Activated T-helper 2 cell treated with anti-CD3 and anti-CD28 coated beads, Interferon-gamma antibody, Interleukin-2, Interleukin-4, amounts not matched to agents 10 μg/mL and 5 μg/mL and 100 μg/mL, durations not matched to agents 14 hours and 24 hours and 36 hours (primary cell): ENCODE measurements at regions of chr9 and their contacts with region 1.

Region 1: GRCh38 chr9:100426530-100427428 is at the start of gene MSANTD3:
- DNase-seq: peak; percentile 50
- H3K4me3 Mint-ChIP-seq: peak within 1 kb of the TSS; percentile 85
- H3K27ac Mint-ChIP-seq: peak within 1 kb of the TSS; percentile 89
- H3K4me1 Mint-ChIP-seq: peaks cover 26% of the 10 kb centered on the region
- H3K27me3 Mint-ChIP-seq: peaks cover 11% of the 10 kb centered on the region
- total RNA-seq, gene MSANTD3: 16.2 and 17.6 TPM in 2 replicates

Region 2: DNA sequence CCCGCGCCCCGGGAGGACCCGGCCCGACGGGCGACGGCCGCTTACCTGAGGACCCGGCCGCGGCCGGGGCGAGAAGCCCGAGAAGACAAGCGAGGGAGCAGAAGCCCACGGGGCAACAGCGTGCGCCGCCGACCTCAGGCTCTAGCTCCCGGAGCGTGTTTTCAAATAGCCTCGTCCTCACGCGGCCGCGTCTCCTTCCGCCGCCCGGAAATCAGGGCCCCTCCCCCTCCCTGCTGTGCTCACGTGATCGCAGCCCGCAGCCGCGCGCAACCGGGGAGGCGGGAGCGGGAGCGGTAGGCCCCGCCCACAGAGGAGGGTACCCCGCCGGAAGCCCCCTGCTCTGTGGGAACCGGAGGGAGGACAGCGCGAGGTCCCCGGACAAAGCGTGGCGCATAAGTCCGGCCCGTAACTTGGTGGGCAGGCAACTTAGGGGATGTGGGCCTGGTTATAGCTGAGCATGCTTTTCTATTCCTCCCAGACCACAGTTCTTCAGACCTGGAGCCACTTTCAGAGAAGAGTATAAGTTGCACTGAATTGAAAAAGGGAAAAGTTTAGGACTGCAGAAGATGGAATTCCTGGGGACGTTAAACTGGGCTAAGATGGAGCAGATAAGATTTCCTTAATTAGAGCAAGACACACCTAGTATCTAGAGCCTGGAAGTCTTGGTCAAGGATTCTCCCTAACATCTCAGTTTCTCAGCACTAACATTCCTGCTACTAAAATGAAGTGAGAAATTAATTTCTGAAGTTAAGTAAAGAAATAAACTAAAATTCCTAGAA is 73.9 kb before region 1 on chr9 and contains the start of gene TEX10:
- intact Hi-C with region 1: loop called (anchors 1 kb)
- DNase-seq: peak; percentile 86
- H3K4me3 Mint-ChIP-seq: peak within 1 kb of the TSS; percentile 96
- H3K27ac Mint-ChIP-seq: peak within 1 kb of the TSS; percentile 80
- H3K4me1 Mint-ChIP-seq: peaks cover 38% of the 10 kb centered on the region
- H3K27me3 Mint-ChIP-seq: no peaks in the 10 kb centered on the region
- total RNA-seq, gene TEX10: 26.9 and 30.0 TPM in 2 replicates

Region 3: GRCh38 chr9:100397529-100398266 is 29.1 kb before region 1 on chr9:
- intact Hi-C with region 1: no loop called
- DNase-seq: no peak
- H3K4me3 Mint-ChIP-seq: no peak overlapping the region
- H3K27ac Mint-ChIP-seq: no peak overlapping the region
- H3K4me1 Mint-ChIP-seq: no peaks in the 10 kb centered on the region
- H3K27me3 Mint-ChIP-seq: peaks cover 15% of the 10 kb centered on the region

Region 4: DNA sequence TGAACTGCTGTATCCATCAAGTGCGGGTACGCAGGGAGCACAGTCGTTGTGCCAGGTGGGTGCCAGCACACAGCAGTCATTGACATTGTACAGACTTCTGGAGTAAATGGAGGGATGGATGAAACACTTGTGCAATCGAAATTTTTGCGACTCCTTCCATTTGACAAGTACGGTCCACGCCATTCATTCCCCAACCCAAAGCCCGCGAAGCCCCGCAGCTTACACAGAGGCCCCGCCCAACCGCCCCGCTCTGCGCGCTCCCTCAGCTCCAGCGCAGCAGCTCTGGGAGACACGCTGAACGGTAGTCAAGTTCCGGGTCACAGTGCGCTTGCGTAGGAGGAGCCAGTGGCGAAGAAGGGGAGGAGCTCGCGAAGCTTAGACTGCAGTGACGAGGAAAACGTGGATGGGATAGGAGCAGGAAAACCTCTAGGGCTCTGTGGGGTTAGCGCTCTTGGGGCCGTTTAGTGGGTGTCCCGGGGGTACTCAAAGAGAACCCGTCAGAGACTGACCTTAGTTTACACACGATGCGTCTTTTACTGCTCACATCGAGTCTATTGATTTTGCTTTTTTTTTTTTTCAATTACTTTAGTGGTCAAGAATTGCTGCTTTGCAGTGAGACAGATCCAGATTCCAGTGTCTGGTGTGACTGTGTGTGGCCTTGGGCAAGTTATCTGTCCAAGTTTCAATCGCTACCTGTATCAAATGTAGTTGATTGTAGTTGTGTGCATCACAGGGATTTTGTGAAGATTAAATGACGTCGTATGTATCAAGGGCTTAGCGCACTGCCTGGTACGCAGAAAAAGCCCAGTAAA is 15.1 kb before region 1 on chr9:
- intact Hi-C with region 1: loop called (anchors 1 kb)
- DNase-seq: peak; percentile 83
- H3K4me3 Mint-ChIP-seq: peak overlapping the region; percentile 77
- H3K27ac Mint-ChIP-seq: peak overlapping the region; percentile 43
- H3K4me1 Mint-ChIP-seq: peaks cover 12% of the 10 kb centered on the region
- H3K27me3 Mint-ChIP-seq: peaks cover 15% of the 10 kb centered on the region

Region 5: GRCh38 chr9:100455470-100455869 is 28.7 kb after region 1 on chr9:
- intact Hi-C with region 1: no loop called
- DNase-seq: no peak
- H3K4me3 Mint-ChIP-seq: no peak overlapping the region
- H3K27ac Mint-ChIP-seq: no peak overlapping the region
- H3K4me1 Mint-ChIP-seq: peaks cover 2% of the 10 kb centered on the region
- H3K27me3 Mint-ChIP-seq: peaks cover 13% of the 10 kb centered on the region

Region 6: DNA sequence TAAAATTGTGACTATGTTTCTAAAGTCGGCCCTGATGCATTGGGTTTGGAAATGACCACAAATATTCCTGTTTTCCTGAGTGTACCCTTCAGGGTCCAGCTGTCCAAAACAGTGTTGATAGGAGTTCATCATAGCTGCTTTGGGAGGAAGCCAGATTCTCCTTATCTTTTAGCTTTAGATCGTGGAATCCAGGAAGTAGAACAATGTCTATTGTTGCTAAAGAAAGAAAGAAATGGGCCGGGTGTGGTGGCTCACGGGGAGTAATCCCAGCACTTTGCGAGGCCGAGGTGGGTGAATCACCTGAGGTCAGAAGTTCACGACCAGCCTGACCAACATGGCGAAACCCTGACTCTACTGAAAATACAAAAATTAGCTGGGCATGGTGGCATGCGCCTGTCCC is 160.6 kb after region 1 on chr9:
- intact Hi-C with region 1: no loop called
- DNase-seq: no peak
- H3K4me3 Mint-ChIP-seq: no peak overlapping the region
- H3K27ac Mint-ChIP-seq: no peak overlapping the region
- H3K4me1 Mint-ChIP-seq: no peaks in the 10 kb centered on the region
- H3K27me3 Mint-ChIP-seq: no peaks in the 10 kb centered on the region